Tibial artery (tissue), 4 donors: ENCODE measurements at regions of chr21 and their contacts with region 1.

Region 1: DNA sequence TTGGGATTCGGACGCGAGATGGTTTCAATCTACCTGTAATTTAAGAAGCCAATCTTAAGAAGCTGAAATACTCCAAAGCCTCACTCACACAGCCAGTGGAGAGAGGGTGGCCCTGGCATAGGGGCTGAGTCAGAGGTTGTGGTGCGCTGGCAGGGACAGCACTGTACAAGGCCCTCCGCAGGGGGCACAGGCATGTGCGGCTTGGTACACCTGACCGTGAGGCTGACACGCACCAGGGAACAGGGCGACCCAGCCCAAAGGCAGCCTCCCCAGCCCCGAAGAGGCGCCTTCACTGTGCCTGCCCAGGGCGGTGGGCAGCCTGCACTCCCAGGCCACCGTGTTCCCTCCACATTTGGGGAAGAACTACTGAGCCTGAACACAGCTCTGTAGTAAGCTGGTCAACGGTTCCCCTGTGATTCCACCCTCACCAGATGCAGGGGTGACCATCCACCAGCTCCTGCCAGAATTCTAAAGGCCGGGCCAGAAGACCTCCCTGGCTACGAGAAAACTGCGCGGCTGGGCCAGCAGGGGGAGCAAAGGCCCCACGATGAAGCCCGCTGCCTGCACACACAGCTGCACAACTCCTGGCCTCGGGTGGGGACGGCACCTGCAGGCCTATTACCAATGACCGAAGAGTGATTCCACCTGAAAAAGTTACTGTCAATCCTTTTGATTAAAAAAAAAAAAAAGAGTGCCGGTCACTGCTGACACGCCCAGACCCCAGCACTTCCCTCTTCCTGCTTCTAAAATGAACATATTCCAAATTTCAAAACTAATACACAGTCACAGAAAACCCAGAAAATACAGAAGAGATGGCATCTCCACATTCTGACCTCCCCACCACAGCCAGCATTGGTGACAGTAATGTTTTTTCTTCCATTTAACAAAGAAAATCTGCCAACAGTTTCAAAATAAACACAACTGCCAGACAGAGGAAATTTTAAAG is 49.6 kb upstream of the RIPK4 start:
- DNase-seq: peak; percentile 54 to 80
- H3K4me3 ChIP-seq: no peak overlapping the region
- H3K27ac ChIP-seq: peak overlapping the region; percentile 37 to 46
- H3K4me1 ChIP-seq: peaks cover 0 to 10% (median 7%) of the 10 kb centered on the region in 4 donors
- H3K27me3 ChIP-seq: no peaks in the 10 kb centered on the region
- CTCF ChIP-seq: peak; percentile 77 to 85

Region 2: GRCh38 chr21:41612674-41613532 is 203.6 kb before region 1 on chr21:
- intact Hi-C with region 1: loop called (anchors 5 kb)
- DNase-seq: peak; percentile 90 to 97
- H3K4me3 ChIP-seq: no peak overlapping the region
- H3K27ac ChIP-seq: peak overlapping the region; percentile 92 to 95
- H3K4me1 ChIP-seq: peaks cover 11 to 62% (median 54%) of the 10 kb centered on the region in 4 donors
- H3K27me3 ChIP-seq: no peaks in the 10 kb centered on the region
- CTCF ChIP-seq: peak; percentile 94

Region 3: DNA sequence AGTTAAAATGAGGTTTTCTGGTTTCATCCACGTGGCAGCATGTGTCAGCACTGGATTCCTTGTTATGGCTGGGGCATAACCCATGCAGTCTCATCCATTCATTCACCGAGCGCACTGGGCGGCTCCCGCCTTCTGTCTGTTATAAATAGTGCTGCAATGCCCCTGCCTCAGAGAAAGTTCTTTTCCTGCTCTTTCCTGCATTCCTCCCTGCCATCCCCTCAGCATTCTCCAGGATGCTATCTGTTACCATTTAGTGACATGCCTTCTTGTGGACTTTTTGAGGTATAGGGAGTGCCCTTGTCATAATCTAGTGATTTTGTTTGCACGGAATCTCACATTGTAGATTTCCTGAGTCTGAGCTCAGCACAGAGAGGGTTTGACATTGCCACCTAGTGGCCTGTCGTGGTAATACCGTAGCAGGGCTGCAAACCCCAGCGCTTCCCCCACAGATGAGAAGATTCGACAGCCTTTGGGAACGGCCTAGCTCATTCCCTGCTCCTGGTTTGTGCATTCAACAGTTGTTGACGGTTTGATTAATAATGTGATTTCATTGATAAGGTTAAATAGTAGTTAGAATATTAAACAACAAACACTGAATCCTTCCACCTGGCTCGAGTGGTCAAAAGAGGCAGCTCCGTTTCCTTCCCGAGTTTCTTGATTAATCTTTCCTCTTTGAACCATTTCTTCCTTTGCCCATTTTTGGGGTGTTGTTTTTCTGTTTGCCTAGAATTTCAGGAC is 300.9 kb after region 1 on chr21:
- intact Hi-C with region 1: loop called (anchors 5 kb)
- DNase-seq: peak; percentile 72 to 86
- H3K4me3 ChIP-seq: no peak overlapping the region
- H3K27ac ChIP-seq: no peak overlapping the region
- H3K4me1 ChIP-seq: peaks cover 0 to 20% (median 4%) of the 10 kb centered on the region in 4 donors
- H3K27me3 ChIP-seq: peaks cover 0 to 49% of the 10 kb centered on the region in 2 donors
- CTCF ChIP-seq: peak; percentile 93 to 94